ENCODE measurements at regions of chr21 and their contacts with region 1.

Region 1: GRCh38 chr21:45460611-45461368 is 55.8 kb downstream of the COL18A1 start:
- DNase-seq: peak; percentile 61
- H3K4me3 ChIP-seq: no peak overlapping the region
- H3K27ac ChIP-seq: peak overlapping the region; percentile 91
- H3K27me3 ChIP-seq: no peaks in the 10 kb centered on the region
- CTCF ChIP-seq: no peak

Region 2: DNA sequence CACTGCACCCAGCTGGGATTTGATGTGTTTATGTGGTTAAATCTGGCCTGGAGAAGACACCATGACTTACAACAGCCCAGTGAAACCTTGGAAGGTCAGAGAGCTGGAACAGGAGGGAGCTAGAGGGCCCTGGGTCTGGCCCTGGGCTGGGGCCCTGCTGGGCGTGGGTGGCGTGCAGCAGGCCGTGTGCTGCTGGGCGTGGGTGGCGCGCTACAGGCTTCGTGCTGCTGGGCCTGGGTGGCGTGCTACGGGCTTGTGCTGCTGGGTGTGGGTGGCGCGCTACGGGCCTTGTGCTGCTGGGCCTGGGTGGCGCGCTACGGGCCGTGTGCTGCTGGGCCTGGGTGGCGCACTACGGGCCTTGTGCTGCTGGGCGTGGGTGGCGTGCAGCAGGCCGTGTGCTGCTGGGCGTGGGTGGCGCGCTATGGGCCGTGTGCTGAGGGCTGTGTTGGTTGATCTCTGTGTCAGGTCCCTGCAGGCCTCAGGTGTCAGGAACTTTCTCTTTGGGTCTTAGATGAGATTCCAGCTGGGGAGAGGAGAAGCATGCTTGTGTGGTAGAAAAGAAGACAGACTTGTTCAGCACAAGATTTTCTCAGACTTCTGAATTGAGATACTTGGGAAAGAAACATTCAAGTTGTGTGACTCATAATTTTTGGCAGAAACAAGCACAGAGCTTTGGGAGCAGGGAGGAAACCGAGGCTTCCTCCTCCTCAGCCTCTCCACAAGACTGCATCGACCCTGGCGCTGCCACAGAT is 10.2 kb after region 1 on chr21:
- CTCF ChIA-PET with region 1: no interaction called
- POLR2A ChIA-PET with region 1: interaction called, 13 read pairs
- DNase-seq: peak; percentile 74
- H3K4me3 ChIP-seq: peak overlapping the region; percentile 25; the same call in 1 of the 2 replicates
- H3K27ac ChIP-seq: peak overlapping the region; percentile 91
- H3K27me3 ChIP-seq: no peaks in the 10 kb centered on the region
- CTCF ChIP-seq: no peak

Region 3: GRCh38 chr21:45525153-45526025 is 64.6 kb after region 1 on chr21:
- CTCF ChIA-PET with region 1: no interaction called
- POLR2A ChIA-PET with region 1: no interaction called
- DNase-seq: no peak
- H3K4me3 ChIP-seq: no peak overlapping the region
- H3K27ac ChIP-seq: no peak overlapping the region
- H3K27me3 ChIP-seq: no peaks in the 10 kb centered on the region
- CTCF ChIP-seq: no peak